ENCODE measurements at regions of chr3 and their contacts with region 1.

Region 1: DNA sequence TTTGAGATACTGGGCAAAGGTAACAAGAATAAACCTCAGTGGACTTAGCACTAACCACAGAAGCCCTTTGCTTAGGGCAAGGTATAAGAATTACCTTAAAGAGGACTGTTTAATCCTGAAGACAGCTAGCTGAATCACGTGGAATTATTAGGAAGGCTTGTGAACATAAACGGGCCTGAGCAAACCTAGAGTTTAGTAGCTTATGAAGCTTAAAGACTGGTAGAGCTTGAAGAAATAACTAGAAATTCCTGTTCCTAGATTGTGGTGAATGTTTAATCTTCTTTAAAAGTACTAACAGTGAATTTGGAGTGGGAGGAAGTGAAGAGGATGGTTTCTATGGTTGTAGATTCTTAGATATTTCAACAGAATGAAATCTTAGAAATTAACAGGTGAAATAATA is 428.9 kb upstream of the THRB start:
- DNase-seq: no peak

Region 2: GRCh38 chr3:24336101-24336500 is 587.5 kb before region 1 on chr3:
- intact Hi-C with region 1: no loop called
- DNase-seq: no peak

Region 3: GRCh38 chr3:24985668-24986067 is 62.1 kb after region 1 on chr3:
- intact Hi-C with region 1: loop called (anchors 2 kb)
- DNase-seq: no peak